CD4-positive, alpha-beta T cell (primary cell): ENCODE measurements at regions of chr2 and their contacts with region 1.

Region 1: GRCh38 chr2:25851740-25852503 is 26.4 kb downstream of the ASXL2 start:
- DNase-seq: peak in 5 of 14 experiments; percentile 10 to 84 (median 83)
- ATAC-seq: peak; percentile 96
- H3K4me3 ChIP-seq: peak overlapping the region; percentile 19
- H3K4me3 Mint-ChIP-seq: peak overlapping the region; percentile 68
- H3K27ac ChIP-seq: no peak overlapping the region
- H3K27ac Mint-ChIP-seq: peak overlapping the region; percentile 35
- H3K4me1 ChIP-seq: peaks cover 20% of the 10 kb centered on the region
- H3K4me1 Mint-ChIP-seq: peaks cover 49% of the 10 kb centered on the region
- H3K27me3 ChIP-seq: no peaks in the 10 kb centered on the region
- H3K27me3 Mint-ChIP-seq: no peaks in the 10 kb centered on the region
- CTCF ChIP-seq: peak; percentile 70

Region 2: GRCh38 chr2:25596516-25597244 is 255.2 kb before region 1 on chr2:
- CTCF ChIA-PET with region 1: no interaction called
- POLR2A ChIA-PET with region 1: no interaction called
- intact Hi-C with region 1: no loop called
- DNase-seq: no peak
- ATAC-seq: no peak
- H3K4me3 ChIP-seq: no peak overlapping the region
- H3K4me3 Mint-ChIP-seq: no peak overlapping the region
- H3K27ac ChIP-seq: no peak overlapping the region
- H3K27ac Mint-ChIP-seq: no peak overlapping the region
- H3K4me1 ChIP-seq: peaks cover 2% of the 10 kb centered on the region
- H3K4me1 Mint-ChIP-seq: peaks cover 12% of the 10 kb centered on the region
- H3K27me3 ChIP-seq: no peaks in the 10 kb centered on the region
- H3K27me3 Mint-ChIP-seq: no peaks in the 10 kb centered on the region
- CTCF ChIP-seq: no peak

Region 3: DNA sequence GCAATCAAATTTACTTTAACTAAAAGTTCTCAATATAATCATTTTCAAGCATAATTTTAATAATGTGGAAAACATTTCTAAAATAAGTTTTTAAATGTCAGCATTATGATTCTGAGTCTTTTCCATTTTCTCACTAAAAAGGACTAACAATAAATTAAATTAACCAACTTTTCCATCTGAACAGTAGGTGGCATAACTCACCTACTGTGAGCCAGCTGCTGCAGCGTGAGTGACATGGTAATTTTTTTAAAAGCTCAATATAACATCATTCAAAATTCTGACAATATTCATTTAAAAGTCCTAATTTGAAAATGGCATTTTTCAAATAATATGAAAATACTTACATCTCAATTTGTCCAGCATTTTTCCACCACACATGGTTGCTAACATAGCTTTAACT is 245.0 kb before region 1 on chr2:
- CTCF ChIA-PET with region 1: no interaction called
- POLR2A ChIA-PET with region 1: interaction called, 4 read pairs
- intact Hi-C with region 1: loop called (anchors 2 to 5 kb)
- DNase-seq: peak in 4 of 14 experiments; percentile 17 to 57 (median 49)
- ATAC-seq: peak; percentile 44
- H3K4me3 ChIP-seq: no peak overlapping the region
- H3K4me3 Mint-ChIP-seq: no peak overlapping the region
- H3K27ac ChIP-seq: no peak overlapping the region
- H3K27ac Mint-ChIP-seq: no peak overlapping the region
- H3K4me1 ChIP-seq: no peaks in the 10 kb centered on the region
- H3K4me1 Mint-ChIP-seq: peaks cover 3% of the 10 kb centered on the region
- H3K27me3 ChIP-seq: no peaks in the 10 kb centered on the region
- H3K27me3 Mint-ChIP-seq: no peaks in the 10 kb centered on the region
- CTCF ChIP-seq: peak; percentile 69

Region 4: DNA sequence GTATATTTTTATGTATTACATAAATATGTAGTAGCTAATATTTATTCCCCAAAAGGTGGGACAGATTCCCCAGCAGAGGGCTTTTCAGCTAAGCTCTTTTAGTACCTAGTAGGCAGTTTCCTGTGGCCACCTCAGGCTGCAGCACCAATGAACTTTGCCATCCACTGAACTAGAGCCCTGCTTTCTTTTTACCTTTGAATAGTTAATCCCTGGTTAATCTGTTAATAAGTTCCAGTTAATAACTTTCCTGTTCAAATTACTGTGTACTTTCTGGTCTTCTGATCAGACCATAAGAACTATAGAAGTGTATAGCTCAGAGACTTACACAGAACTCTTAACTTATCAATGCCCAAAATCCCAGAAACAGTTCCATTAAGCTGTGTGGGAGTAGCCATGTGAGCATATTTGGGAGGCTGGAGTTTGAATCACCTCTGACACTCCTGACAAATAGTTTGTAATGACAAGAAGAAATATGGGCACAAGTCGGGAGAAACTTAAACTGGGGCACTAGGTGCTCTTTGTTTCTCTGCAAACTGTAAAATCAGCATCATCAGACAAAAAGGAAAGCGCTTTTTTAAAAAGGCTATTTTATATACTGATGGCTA is 13.7 kb before region 1 on chr2:
- CTCF ChIA-PET with region 1: interaction called, 11 read pairs
- POLR2A ChIA-PET with region 1: no interaction called
- intact Hi-C with region 1: no loop called
- DNase-seq: no peak
- ATAC-seq: no peak
- H3K4me3 ChIP-seq: no peak overlapping the region
- H3K4me3 Mint-ChIP-seq: no peak overlapping the region
- H3K27ac ChIP-seq: no peak overlapping the region
- H3K27ac Mint-ChIP-seq: no peak overlapping the region
- H3K4me1 ChIP-seq: no peaks in the 10 kb centered on the region
- H3K4me1 Mint-ChIP-seq: peaks cover 22% of the 10 kb centered on the region
- H3K27me3 ChIP-seq: no peaks in the 10 kb centered on the region
- H3K27me3 Mint-ChIP-seq: no peaks in the 10 kb centered on the region
- CTCF ChIP-seq: no peak

Region 5: GRCh38 chr2:25951071-25951547 is 99.2 kb after region 1 on chr2:
- CTCF ChIA-PET with region 1: interaction called, 8 read pairs
- POLR2A ChIA-PET with region 1: no interaction called
- intact Hi-C with region 1: loop called (anchors 2 kb)
- DNase-seq: peak; percentile 53 to 87 (median 62)
- ATAC-seq: peak; percentile 90
- H3K4me3 ChIP-seq: no peak overlapping the region
- H3K4me3 Mint-ChIP-seq: no peak overlapping the region
- H3K27ac ChIP-seq: no peak overlapping the region
- H3K27ac Mint-ChIP-seq: no peak overlapping the region
- H3K4me1 ChIP-seq: no peaks in the 10 kb centered on the region
- H3K4me1 Mint-ChIP-seq: no peaks in the 10 kb centered on the region
- H3K27me3 ChIP-seq: no peaks in the 10 kb centered on the region
- H3K27me3 Mint-ChIP-seq: no peaks in the 10 kb centered on the region
- CTCF ChIP-seq: peak; percentile 95

Region 6: GRCh38 chr2:26144953-26145680 is 293.2 kb after region 1 on chr2:
- CTCF ChIA-PET with region 1: no interaction called
- POLR2A ChIA-PET with region 1: no interaction called
- intact Hi-C with region 1: loop called (anchors 5 to 10 kb)
- DNase-seq: peak; percentile 31 to 77 (median 50)
- ATAC-seq: peak; percentile 80
- H3K4me3 ChIP-seq: no peak overlapping the region
- H3K4me3 Mint-ChIP-seq: no peak overlapping the region
- H3K27ac ChIP-seq: no peak overlapping the region
- H3K27ac Mint-ChIP-seq: no peak overlapping the region
- H3K4me1 ChIP-seq: no peaks in the 10 kb centered on the region
- H3K4me1 Mint-ChIP-seq: no peaks in the 10 kb centered on the region
- H3K27me3 ChIP-seq: peaks cover 3 to 10% of the 10 kb centered on the region in 2 experiments
- H3K27me3 Mint-ChIP-seq: peaks cover 11% of the 10 kb centered on the region
- CTCF ChIP-seq: peak; percentile 76